ENCODE measurements at regions of chr3 and their contacts with region 1.

Region 1: DNA sequence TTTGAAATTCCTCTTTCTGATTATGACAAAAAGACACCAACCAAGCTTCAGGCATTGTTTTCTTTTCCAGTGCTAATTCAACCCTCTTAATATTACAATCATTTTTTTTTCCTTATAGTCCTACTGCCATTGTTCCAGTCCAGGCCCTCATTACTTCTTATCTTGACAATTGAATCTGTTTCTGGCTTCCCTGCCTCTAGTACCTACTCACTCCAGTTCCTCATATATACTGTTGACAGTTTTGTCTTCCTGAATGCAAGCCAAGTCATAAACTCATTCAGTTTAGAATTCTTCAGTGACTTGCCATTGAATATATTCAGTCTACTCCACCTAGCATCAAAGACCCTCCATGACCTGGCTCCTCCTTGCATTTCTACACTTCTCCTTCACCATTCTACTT is 507.4 kb downstream of the FGF12 start:
- DNase-seq: no peak
- H3K4me3 ChIP-seq: no peak overlapping the region
- H3K27ac ChIP-seq: no peak overlapping the region
- H3K4me1 ChIP-seq: no peaks in the 10 kb centered on the region
- H3K27me3 ChIP-seq: no peaks in the 10 kb centered on the region
- CTCF ChIP-seq: no peak

Region 2: DNA sequence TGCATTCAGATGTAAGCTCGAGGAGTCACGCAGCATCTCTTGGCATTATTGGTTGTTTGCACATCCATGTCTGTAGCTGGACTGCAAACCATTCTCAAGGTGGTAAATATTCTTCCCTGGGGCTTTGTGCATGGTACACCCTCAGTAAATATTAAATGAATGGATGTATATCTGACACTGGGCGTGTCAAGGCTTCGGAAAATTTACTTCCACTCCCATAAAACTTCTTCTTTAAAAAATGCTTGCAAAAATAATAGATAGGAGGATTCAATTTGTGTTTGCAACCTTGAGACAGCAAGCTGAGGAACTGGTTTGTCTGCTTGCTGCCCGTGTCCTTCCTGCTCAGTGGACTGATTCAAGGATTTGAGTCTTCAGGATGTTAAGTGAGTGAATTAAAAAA is 53.6 kb after region 1 on chr3:
- CTCF ChIA-PET with region 1: no interaction called
- POLR2A ChIA-PET with region 1: no interaction called
- intact Hi-C with region 1: loop called (anchors 1 kb)
- DNase-seq: peak; percentile 76 to 85
- H3K4me3 ChIP-seq: no peak overlapping the region
- H3K27ac ChIP-seq: no peak overlapping the region
- H3K4me1 ChIP-seq: peaks cover 38% of the 10 kb centered on the region
- H3K27me3 ChIP-seq: no peaks in the 10 kb centered on the region
- CTCF ChIP-seq: no peak

Measured in PC-9 (cell line).